CD8-positive, alpha-beta T cell (primary cell): ENCODE measurements at regions of chr1 and their contacts with region 1.

Region 1: DNA sequence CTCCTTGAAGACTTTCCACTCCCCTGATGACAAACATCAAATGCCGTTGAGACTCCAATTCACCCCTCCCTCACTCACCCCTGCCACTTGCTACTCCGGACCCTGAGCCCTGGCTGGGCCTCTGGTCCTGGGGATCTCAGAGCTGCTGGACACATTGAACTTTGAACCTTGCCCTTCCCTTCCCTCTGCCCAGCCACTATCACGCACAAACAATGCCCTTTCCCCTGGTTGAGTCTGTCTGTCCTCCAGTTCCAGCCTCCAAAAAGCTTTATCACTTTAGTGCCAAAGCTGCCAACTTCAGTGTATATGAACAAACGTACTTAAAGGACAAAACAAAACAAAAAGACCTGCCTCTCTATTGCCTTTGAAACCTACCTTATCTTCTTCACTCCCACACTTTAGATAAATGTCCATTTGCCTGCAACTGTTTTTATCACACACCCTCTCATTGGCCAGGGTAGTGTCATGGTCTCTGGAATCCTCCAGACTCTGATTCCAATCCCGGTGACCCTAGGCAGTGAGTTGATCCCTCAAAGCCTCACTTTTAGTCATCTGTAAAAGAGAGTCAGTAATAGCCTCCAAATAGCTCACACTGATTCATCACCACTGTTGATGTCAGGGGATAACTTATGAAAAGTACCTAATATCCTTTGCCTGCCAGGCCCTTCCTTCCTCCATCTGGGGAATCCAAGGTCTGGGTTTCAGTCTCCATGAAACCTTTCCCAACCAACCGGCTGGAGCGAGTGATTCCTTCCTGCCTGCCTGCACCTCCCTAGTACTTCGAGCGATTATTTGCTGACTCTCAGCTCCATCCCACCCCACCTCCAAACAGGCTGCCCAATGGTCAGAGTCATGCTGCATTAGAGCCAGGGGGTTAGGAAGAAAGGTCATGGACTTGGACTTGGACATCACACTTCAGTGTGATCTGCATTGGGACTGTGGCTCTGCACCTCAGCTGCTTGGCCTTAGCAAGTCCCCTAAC is 15.9 kb upstream of the SPOCD1 start:
- DNase-seq: peak in 1 of 9 experiments; percentile 34
- ATAC-seq: no peak
- H3K4me3 ChIP-seq: no peak overlapping the region
- H3K4me3 Mint-ChIP-seq: no peak overlapping the region
- H3K27ac ChIP-seq: no peak overlapping the region
- H3K27ac Mint-ChIP-seq: no peak overlapping the region
- H3K4me1 ChIP-seq: peaks cover 28% of the 10 kb centered on the region
- H3K4me1 Mint-ChIP-seq: peaks cover 32% of the 10 kb centered on the region
- H3K27me3 ChIP-seq: no peaks in the 10 kb centered on the region
- H3K27me3 Mint-ChIP-seq: no peaks in the 10 kb centered on the region
- CTCF ChIP-seq: no peak

Region 2: GRCh38 chr1:31626223-31627207 is 205.2 kb before region 1 on chr1:
- CTCF ChIA-PET with region 1: no interaction called
- POLR2A ChIA-PET with region 1: no interaction called
- intact Hi-C with region 1: no loop called
- DNase-seq: no peak
- ATAC-seq: no peak
- H3K4me3 ChIP-seq: no peak overlapping the region
- H3K4me3 Mint-ChIP-seq: no peak overlapping the region
- H3K27ac ChIP-seq: no peak overlapping the region
- H3K27ac Mint-ChIP-seq: no peak overlapping the region
- H3K4me1 ChIP-seq: no peaks in the 10 kb centered on the region
- H3K4me1 Mint-ChIP-seq: no peaks in the 10 kb centered on the region
- H3K27me3 ChIP-seq: no peaks in the 10 kb centered on the region
- H3K27me3 Mint-ChIP-seq: no peaks in the 10 kb centered on the region
- CTCF ChIP-seq: no peak

Region 3: DNA sequence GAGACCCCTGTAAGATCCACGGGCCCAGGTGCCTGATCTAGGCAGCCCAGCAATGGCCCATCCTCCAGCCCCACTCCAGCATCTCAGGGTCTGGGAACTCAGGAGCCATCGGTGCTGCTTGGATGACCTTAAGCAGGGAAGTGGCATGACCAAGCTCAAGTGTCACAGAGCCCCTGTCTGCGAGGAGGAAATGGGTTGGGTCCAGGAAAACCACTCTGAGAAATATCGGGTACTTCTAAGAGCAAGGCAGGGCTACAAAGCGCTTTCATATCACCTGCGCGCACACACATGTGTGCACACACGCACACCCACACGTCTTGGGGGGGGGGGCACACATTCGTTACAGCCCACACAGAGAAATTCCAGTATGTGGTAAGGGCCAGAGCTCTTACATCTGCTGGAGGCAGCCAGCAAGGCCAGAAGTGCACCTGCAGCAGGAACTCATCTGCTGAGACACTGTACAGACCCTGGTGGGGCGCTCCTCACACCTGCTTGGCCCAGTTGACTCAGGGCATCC is 16.8 kb after region 1 on chr1:
- CTCF ChIA-PET with region 1: interaction called, 3 read pairs
- POLR2A ChIA-PET with region 1: interaction called, 7 read pairs
- intact Hi-C with region 1: loop called in 1 of 2 experiments (anchors 1 kb)
- DNase-seq: peak; percentile 10 to 75 (median 52)
- ATAC-seq: peak; percentile 86
- H3K4me3 ChIP-seq: peak overlapping the region in 1 of 2 experiments; percentile 29
- H3K4me3 Mint-ChIP-seq: peak overlapping the region; percentile 71
- H3K27ac ChIP-seq: peak overlapping the region; percentile 28 to 66
- H3K27ac Mint-ChIP-seq: peak overlapping the region; percentile 94
- H3K4me1 ChIP-seq: peaks cover 61% of the 10 kb centered on the region
- H3K4me1 Mint-ChIP-seq: peaks cover 60% of the 10 kb centered on the region
- H3K27me3 ChIP-seq: no peaks in the 10 kb centered on the region
- H3K27me3 Mint-ChIP-seq: no peaks in the 10 kb centered on the region
- CTCF ChIP-seq: no peak

Region 4: GRCh38 chr1:31886866-31887265 is 55.2 kb after region 1 on chr1:
- CTCF ChIA-PET with region 1: interaction called, 5 read pairs
- POLR2A ChIA-PET with region 1: interaction called, 4 read pairs
- intact Hi-C with region 1: loop called (anchors 2 to 10 kb)
- DNase-seq: no peak
- ATAC-seq: no peak
- H3K4me3 ChIP-seq: no peak overlapping the region
- H3K4me3 Mint-ChIP-seq: no peak overlapping the region
- H3K27ac ChIP-seq: no peak overlapping the region
- H3K27ac Mint-ChIP-seq: no peak overlapping the region
- H3K4me1 ChIP-seq: peaks cover 20% of the 10 kb centered on the region
- H3K4me1 Mint-ChIP-seq: peaks cover 24% of the 10 kb centered on the region
- H3K27me3 ChIP-seq: no peaks in the 10 kb centered on the region
- H3K27me3 Mint-ChIP-seq: no peaks in the 10 kb centered on the region
- CTCF ChIP-seq: no peak

Region 5: DNA sequence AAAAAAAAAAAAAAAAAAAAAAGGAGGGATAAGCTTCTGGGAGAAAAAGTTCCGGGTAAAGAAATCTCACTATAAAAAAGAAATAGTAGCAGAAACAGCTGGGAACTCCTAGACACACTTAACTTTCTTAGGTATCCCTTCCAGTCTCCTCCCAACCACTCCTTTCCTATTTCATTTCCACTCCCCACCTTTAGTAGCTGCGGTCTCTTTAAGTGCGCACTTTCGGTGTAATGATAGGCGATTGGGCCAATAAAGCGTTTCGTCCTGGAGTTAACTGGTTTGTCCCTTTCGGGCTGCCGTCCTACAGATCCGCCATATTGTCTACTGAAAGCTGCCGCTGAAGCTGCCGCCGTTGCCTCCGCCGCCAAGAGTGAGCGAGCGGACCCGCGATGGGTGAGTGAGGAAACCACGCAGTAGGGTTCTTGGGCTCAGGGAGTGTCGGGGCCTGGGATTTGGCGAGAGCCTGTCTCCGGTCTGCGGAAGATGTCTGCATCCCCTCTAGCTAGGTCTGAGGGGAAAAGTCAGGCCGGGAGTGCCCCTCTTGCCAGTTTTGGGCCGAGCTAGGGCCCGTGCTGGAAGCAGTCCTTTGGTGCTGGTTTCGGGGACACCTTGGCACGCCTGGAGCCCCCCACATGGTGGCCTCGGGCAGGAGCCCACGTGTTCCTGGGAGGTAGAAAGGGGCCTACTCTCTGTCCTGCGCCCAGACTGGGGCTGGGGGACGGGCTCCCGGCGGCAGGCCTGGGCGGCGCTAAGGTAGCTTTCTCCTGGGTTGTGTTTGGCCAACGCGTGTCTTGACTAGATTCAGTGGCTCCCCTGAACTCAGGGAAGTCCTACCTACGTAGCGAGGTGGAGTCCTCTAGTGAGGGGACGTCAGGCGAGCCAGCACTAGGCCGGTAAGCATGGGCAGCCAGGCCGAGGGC is 276.3 kb after region 1 on chr1 and contains the start of gene KPNA6:
- CTCF ChIA-PET with region 1: no interaction called
- POLR2A ChIA-PET with region 1: no interaction called
- intact Hi-C with region 1: no loop called
- DNase-seq: peak; percentile 83 to 98 (median 90)
- ATAC-seq: peak; percentile 89
- H3K4me3 ChIP-seq: peak within 1 kb of the TSS; percentile 87 to 95
- H3K4me3 Mint-ChIP-seq: peak within 1 kb of the TSS; percentile 98
- H3K27ac ChIP-seq: peak within 1 kb of the TSS; percentile 84 to 93
- H3K27ac Mint-ChIP-seq: peak within 1 kb of the TSS; percentile 98
- H3K4me1 ChIP-seq: peaks cover 45% of the 10 kb centered on the region
- H3K4me1 Mint-ChIP-seq: peaks cover 50% of the 10 kb centered on the region
- H3K27me3 ChIP-seq: no peaks in the 10 kb centered on the region
- H3K27me3 Mint-ChIP-seq: no peaks in the 10 kb centered on the region
- CTCF ChIP-seq: no peak
- total RNA-seq, gene KPNA6: 51.7 to 58.7 TPM